ENCODE measurements at regions of chr17 and their contacts with region 1.

Region 1: DNA sequence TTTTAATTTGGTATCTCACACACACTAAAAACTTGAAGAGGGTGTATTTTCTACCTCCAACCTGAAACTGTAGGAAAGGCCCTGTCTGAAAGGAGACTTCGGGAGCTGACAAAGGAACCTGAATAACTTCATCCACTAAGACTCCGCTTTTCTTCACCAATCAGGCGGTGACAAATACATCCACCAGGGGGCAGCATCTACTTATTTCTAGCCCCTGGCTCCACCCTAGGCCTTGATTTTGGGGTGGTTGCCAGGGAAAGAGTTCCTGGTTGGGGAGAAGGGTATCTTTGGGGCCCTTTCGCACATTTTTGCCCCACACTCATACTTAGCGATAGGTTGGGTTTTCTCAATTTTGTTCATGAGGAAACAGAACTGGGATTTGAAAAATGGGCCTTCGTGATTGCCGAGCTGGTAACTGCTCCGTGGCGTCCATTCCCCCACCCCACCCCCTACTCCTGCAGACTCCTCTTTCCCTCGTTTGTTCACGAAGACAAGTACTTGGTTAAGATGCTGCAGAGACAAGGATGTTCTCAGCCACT is 4.8 kb upstream of the ARL4D start:
- DNase-seq: peak; percentile 66
- ATAC-seq: peak; percentile 35
- H3K4me3 Mint-ChIP-seq: no peak overlapping the region
- H3K27ac Mint-ChIP-seq: peak overlapping the region; percentile 41
- H3K4me1 Mint-ChIP-seq: peaks cover 42% of the 10 kb centered on the region
- H3K27me3 Mint-ChIP-seq: no peaks in the 10 kb centered on the region
- CTCF ChIP-seq: no peak

Region 2: GRCh38 chr17:43360739-43361505 is 33.1 kb before region 1 on chr17:
- CTCF ChIA-PET with region 1: interaction called, 3 read pairs
- POLR2A ChIA-PET with region 1: interaction called, 546 read pairs
- intact Hi-C with region 1: no loop called
- DNase-seq: peak; percentile 65
- ATAC-seq: peak; percentile 76
- H3K4me3 Mint-ChIP-seq: peak overlapping the region; percentile 93
- H3K27ac Mint-ChIP-seq: peak overlapping the region; percentile 100
- H3K4me1 Mint-ChIP-seq: peaks cover 15% of the 10 kb centered on the region
- H3K27me3 Mint-ChIP-seq: peaks cover 2% of the 10 kb centered on the region
- CTCF ChIP-seq: no peak

Region 3: GRCh38 chr17:43428524-43428923 is 34.5 kb after region 1 on chr17:
- CTCF ChIA-PET with region 1: interaction called, 3 read pairs
- POLR2A ChIA-PET with region 1: no interaction called
- intact Hi-C with region 1: loop called (anchors 1 kb)
- DNase-seq: no peak
- ATAC-seq: no peak
- H3K4me3 Mint-ChIP-seq: no peak overlapping the region
- H3K27ac Mint-ChIP-seq: no peak overlapping the region
- H3K4me1 Mint-ChIP-seq: no peaks in the 10 kb centered on the region
- H3K27me3 Mint-ChIP-seq: peaks cover 12% of the 10 kb centered on the region
- CTCF ChIP-seq: no peak

Region 4: DNA sequence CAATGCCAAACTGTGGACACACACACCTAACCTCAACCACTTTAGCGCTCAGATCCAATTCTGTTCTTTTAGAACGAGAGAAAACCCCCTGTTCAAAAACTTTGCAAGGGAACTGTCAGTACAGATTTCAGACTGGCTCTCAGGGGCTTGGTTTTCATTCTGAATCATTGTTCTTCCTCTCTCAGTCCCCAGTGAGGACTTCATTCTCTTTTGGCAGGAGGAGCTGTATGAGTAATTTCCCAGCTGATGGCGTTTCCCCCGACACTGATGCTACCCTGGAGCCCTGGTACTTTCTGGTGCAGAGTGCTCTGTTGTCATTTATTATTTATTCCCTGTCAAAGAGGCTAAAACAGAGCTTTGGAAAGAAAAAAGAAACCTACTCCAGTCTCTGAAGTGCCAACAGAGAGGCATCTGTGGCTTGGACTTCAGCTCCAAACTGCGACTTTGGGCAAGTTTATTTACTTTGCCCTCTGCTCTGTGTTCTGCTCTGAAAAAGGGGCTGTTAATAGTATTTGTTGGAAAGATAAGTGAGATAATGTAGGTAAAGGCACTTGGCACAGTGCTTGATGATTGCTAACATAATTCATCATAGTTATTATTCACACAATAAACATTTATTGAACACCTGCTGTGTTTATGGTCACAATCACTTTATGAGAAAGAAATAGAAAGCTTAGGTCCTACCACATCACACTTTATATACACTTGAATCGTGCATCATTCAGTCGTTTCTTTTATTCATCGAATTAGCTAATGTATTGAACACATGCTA is 123.8 kb after region 1 on chr17:
- CTCF ChIA-PET with region 1: no interaction called
- POLR2A ChIA-PET with region 1: interaction called, 11 read pairs
- intact Hi-C with region 1: no loop called
- DNase-seq: no peak
- ATAC-seq: no peak
- H3K4me3 Mint-ChIP-seq: no peak overlapping the region
- H3K27ac Mint-ChIP-seq: no peak overlapping the region
- H3K4me1 Mint-ChIP-seq: no peaks in the 10 kb centered on the region
- H3K27me3 Mint-ChIP-seq: no peaks in the 10 kb centered on the region
- CTCF ChIP-seq: no peak